Natural killer cell (primary cell): ENCODE measurements at regions of chr21 and their contacts with region 1.

Region 1: GRCh38 chr21:29073222-29074006 is at the start of gene CCT8:
- DNase-seq: peak; percentile 95 to 100
- ATAC-seq: peak; percentile 94 to 98 (median 95)
- H3K4me3 ChIP-seq: peak within 1 kb of the TSS; percentile 89
- H3K4me3 Mint-ChIP-seq: peak within 1 kb of the TSS; percentile 100
- H3K27ac ChIP-seq: peak within 1 kb of the TSS; percentile 80
- H3K27ac Mint-ChIP-seq: peak within 1 kb of the TSS; percentile 100
- H3K4me1 ChIP-seq: peaks cover 25% of the 10 kb centered on the region
- H3K4me1 Mint-ChIP-seq: peaks cover 44 to 56% of the 10 kb centered on the region in 2 donors
- H3K27me3 ChIP-seq: no peaks in the 10 kb centered on the region
- H3K27me3 Mint-ChIP-seq: no peaks in the 10 kb centered on the region
- CTCF ChIP-seq: no peak
- total RNA-seq, gene CCT8: 76.2 to 90.3 (median 82.9) TPM

Region 2: GRCh38 chr21:27393726-27394125 is 1679.7 kb before region 1 on chr21:
- intact Hi-C with region 1: no loop called
- DNase-seq: no peak
- ATAC-seq: no peak
- H3K4me3 ChIP-seq: no peak overlapping the region
- H3K4me3 Mint-ChIP-seq: no peak overlapping the region
- H3K27ac ChIP-seq: no peak overlapping the region
- H3K27ac Mint-ChIP-seq: no peak overlapping the region
- H3K4me1 ChIP-seq: no peaks in the 10 kb centered on the region
- H3K4me1 Mint-ChIP-seq: no peaks in the 10 kb centered on the region
- H3K27me3 ChIP-seq: no peaks in the 10 kb centered on the region
- H3K27me3 Mint-ChIP-seq: no peaks in the 10 kb centered on the region
- CTCF ChIP-seq: no peak

Region 3: GRCh38 chr21:28516991-28517592 is 556.3 kb before region 1 on chr21:
- intact Hi-C with region 1: no loop called
- DNase-seq: peak; percentile 39 to 76
- ATAC-seq: peak; percentile 78 to 80 (median 79)
- H3K4me3 ChIP-seq: no peak overlapping the region
- H3K4me3 Mint-ChIP-seq: no peak overlapping the region
- H3K27ac ChIP-seq: no peak overlapping the region
- H3K27ac Mint-ChIP-seq: no peak overlapping the region
- H3K4me1 ChIP-seq: peaks cover 5% of the 10 kb centered on the region
- H3K4me1 Mint-ChIP-seq: peaks cover 13 to 24% of the 10 kb centered on the region in 2 donors
- H3K27me3 ChIP-seq: no peaks in the 10 kb centered on the region
- H3K27me3 Mint-ChIP-seq: no peaks in the 10 kb centered on the region
- CTCF ChIP-seq: peak; percentile 62

Region 4: GRCh38 chr21:28832013-28832714 is 241.2 kb before region 1 on chr21:
- intact Hi-C with region 1: loop called (anchors 10 kb)
- DNase-seq: peak in 1 of 2 donors; percentile 69
- ATAC-seq: peak; percentile 81 to 92 (median 91)
- H3K4me3 ChIP-seq: no peak overlapping the region
- H3K4me3 Mint-ChIP-seq: peak overlapping the region; percentile 80
- H3K27ac ChIP-seq: peak overlapping the region; percentile 57
- H3K27ac Mint-ChIP-seq: peak overlapping the region; percentile 82 to 86
- H3K4me1 ChIP-seq: peaks cover 34% of the 10 kb centered on the region
- H3K4me1 Mint-ChIP-seq: peaks cover 90 to 93% of the 10 kb centered on the region in 2 donors
- H3K27me3 ChIP-seq: no peaks in the 10 kb centered on the region
- H3K27me3 Mint-ChIP-seq: no peaks in the 10 kb centered on the region
- CTCF ChIP-seq: no peak

Region 5: GRCh38 chr21:28884976-28885852 is 188.2 kb before region 1 on chr21:
- intact Hi-C with region 1: loop called (anchors 10 kb)
- DNase-seq: peak; percentile 86 to 98
- ATAC-seq: peak; percentile 89 to 98 (median 93)
- H3K4me3 ChIP-seq: peak overlapping the region; percentile 66
- H3K4me3 Mint-ChIP-seq: peak overlapping the region; percentile 95
- H3K27ac ChIP-seq: peak overlapping the region; percentile 86
- H3K27ac Mint-ChIP-seq: peak overlapping the region; percentile 98 to 100
- H3K4me1 ChIP-seq: peaks cover 3% of the 10 kb centered on the region
- H3K4me1 Mint-ChIP-seq: peaks cover 23 to 25% of the 10 kb centered on the region in 2 donors
- H3K27me3 ChIP-seq: no peaks in the 10 kb centered on the region
- H3K27me3 Mint-ChIP-seq: peaks cover 12 to 31% of the 10 kb centered on the region in 2 donors
- CTCF ChIP-seq: no peak

Region 6: GRCh38 chr21:28992526-28993292 is 80.7 kb before region 1 on chr21 and contains the start of gene LTN1:
- intact Hi-C with region 1: loop called (anchors 2 kb)
- DNase-seq: peak; percentile 99 to 100
- ATAC-seq: peak; percentile 94 to 99 (median 95)
- H3K4me3 ChIP-seq: peak within 1 kb of the TSS; percentile 89
- H3K4me3 Mint-ChIP-seq: peak within 1 kb of the TSS; percentile 99
- H3K27ac ChIP-seq: peak within 1 kb of the TSS; percentile 90
- H3K27ac Mint-ChIP-seq: peak within 1 kb of the TSS; percentile 95 to 98
- H3K4me1 ChIP-seq: peaks cover 10% of the 10 kb centered on the region
- H3K4me1 Mint-ChIP-seq: peaks cover 29 to 36% of the 10 kb centered on the region in 2 donors
- H3K27me3 ChIP-seq: no peaks in the 10 kb centered on the region
- H3K27me3 Mint-ChIP-seq: no peaks in the 10 kb centered on the region
- CTCF ChIP-seq: no peak
- total RNA-seq, gene LTN1: 33.7 to 43.1 (median 35.0) TPM

Region 7: DNA sequence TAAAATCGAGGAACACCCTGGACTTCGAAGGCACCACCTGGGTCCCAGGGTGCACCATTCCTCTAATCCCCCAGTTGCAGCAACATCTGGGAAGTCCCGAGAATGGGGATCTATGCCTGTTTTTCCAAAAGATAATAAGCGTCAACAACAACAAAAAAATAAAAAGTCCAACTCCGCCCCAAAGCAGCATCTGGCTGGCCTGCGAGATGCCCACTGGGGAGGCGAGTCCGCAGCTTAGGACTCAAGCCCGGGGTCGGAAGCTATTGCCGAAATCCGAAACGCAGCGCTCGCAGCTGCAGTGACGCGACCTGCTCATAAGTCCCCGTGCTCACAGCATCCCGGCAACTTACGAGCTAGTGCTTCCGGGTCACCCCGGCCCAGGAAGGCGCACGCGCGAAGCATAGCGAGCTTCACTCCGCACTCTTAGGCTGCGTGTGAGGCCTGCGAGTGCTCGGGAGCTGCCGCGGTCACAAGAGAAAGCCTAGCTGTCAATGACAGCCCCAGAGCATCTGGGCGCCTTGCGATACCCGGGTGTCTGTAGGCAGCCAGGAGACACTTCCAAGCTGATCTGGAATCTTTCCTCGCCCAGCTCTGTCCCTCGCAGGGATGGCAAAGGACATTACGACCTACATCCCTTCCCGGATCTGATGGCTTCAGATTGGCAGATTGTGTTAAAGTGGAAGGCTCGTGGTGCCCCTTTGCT is 70.8 kb before region 1 on chr21:
- intact Hi-C with region 1: loop called (anchors 1 kb)
- DNase-seq: peak; percentile 93 to 99
- ATAC-seq: peak; percentile 99 to 100 (median 100)
- H3K4me3 ChIP-seq: peak overlapping the region; percentile 69
- H3K4me3 Mint-ChIP-seq: peak overlapping the region; percentile 87
- H3K27ac ChIP-seq: peak overlapping the region; percentile 95
- H3K27ac Mint-ChIP-seq: peak overlapping the region; percentile 95 to 96
- H3K4me1 ChIP-seq: peaks cover 12% of the 10 kb centered on the region
- H3K4me1 Mint-ChIP-seq: peaks cover 6 to 7% of the 10 kb centered on the region in 2 donors
- H3K27me3 ChIP-seq: no peaks in the 10 kb centered on the region
- H3K27me3 Mint-ChIP-seq: no peaks in the 10 kb centered on the region
- CTCF ChIP-seq: no peak

Region 8: DNA sequence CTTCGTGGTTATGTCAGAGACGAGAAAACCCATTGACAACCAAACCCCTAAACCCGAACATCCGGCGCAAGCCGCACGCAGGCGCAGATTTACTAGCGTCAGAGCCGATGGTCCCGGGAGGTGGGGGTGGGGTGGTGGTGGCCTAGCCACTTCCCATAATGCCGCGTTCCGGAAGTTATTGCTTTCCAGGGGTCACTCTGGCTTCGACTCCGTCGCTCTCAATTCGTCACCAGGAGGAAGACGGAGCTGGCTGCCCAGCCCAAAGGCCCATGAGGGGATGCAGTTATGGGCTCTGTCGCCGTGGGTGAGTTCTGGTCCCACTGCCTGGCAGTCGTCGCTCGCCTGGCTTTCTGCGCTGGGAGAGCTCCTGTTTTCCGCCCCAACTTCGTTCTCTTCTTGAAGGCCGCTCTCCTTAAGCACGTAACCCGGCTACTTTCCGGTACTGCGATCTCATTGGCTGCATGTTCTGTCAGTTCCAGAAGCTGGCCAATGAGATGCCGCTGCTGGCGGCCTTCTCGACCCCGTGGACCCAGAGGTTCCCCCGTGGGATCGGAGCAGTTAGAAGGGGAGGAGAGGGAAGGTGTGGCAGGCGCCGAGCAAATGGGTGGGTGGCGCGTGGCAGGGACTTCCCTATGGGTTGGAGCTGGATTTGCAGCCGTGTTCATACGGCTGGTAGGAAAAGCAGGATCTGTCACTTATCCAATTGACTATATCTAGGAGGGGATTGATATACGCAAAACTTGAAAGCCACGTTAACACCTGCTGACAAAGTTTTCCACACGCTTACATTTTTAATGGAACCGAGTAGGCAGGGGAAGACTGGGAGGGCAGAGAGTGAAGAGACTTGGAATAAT is 48.7 kb before region 1 on chr21 and contains the start of gene USP16:
- intact Hi-C with region 1: loop called (anchors 1 kb)
- DNase-seq: peak; percentile 96 to 98
- ATAC-seq: peak; percentile 82 to 95 (median 85)
- H3K4me3 ChIP-seq: peak within 1 kb of the TSS; percentile 81
- H3K4me3 Mint-ChIP-seq: peak within 1 kb of the TSS; percentile 98
- H3K27ac ChIP-seq: peak within 1 kb of the TSS; percentile 98
- H3K27ac Mint-ChIP-seq: peak within 1 kb of the TSS; percentile 99 to 100
- H3K4me1 ChIP-seq: peaks cover 37% of the 10 kb centered on the region
- H3K4me1 Mint-ChIP-seq: peaks cover 43 to 56% of the 10 kb centered on the region in 2 donors
- H3K27me3 ChIP-seq: no peaks in the 10 kb centered on the region
- H3K27me3 Mint-ChIP-seq: no peaks in the 10 kb centered on the region
- CTCF ChIP-seq: no peak
- total RNA-seq, gene USP16: 67.9 to 76.9 (median 75.7) TPM

Region 9: DNA sequence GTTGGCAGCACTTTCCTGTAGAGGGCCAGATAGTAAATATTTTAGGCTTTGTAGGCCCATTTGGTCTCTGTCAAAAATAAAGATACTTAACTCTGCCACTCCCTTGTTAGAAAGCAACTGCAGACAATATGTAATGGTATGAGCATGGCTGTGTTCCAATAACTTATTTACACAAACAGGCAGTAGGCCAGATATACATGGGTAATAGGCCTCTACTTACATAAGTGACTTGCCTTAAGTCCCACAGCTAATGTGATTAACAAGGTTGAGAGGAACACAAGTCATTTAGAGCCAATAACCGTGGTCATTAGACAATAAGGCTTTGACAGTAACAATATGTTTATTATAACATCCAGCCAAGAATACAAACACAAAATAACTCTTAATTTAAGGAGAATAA is 17.4 kb before region 1 on chr21:
- intact Hi-C with region 1: no loop called
- DNase-seq: no peak
- ATAC-seq: no peak
- H3K4me3 ChIP-seq: no peak overlapping the region
- H3K4me3 Mint-ChIP-seq: no peak overlapping the region
- H3K27ac ChIP-seq: no peak overlapping the region
- H3K27ac Mint-ChIP-seq: peak overlapping the region in 1 of 2 donors; percentile 29
- H3K4me1 ChIP-seq: no peaks in the 10 kb centered on the region
- H3K4me1 Mint-ChIP-seq: no peaks in the 10 kb centered on the region
- H3K27me3 ChIP-seq: no peaks in the 10 kb centered on the region
- H3K27me3 Mint-ChIP-seq: no peaks in the 10 kb centered on the region
- CTCF ChIP-seq: no peak

Region 10: GRCh38 chr21:29298348-29299045 is 225.1 kb after region 1 on chr21 and contains the start of gene BACH1:
- intact Hi-C with region 1: loop called (anchors 2 kb)
- DNase-seq: peak; percentile 86 to 90
- ATAC-seq: peak; percentile 69 to 91 (median 84)
- H3K4me3 ChIP-seq: peak within 1 kb of the TSS; percentile 74
- H3K4me3 Mint-ChIP-seq: peak within 1 kb of the TSS; percentile 94
- H3K27ac ChIP-seq: peak within 1 kb of the TSS; percentile 84
- H3K27ac Mint-ChIP-seq: peak within 1 kb of the TSS; percentile 84 to 95
- H3K4me1 ChIP-seq: peaks cover 17% of the 10 kb centered on the region
- H3K4me1 Mint-ChIP-seq: peaks cover 35 to 51% of the 10 kb centered on the region in 2 donors
- H3K27me3 ChIP-seq: no peaks in the 10 kb centered on the region
- H3K27me3 Mint-ChIP-seq: no peaks in the 10 kb centered on the region
- CTCF ChIP-seq: no peak
- total RNA-seq, gene BACH1: 74.2 to 111 (median 86.3) TPM

Region 11: DNA sequence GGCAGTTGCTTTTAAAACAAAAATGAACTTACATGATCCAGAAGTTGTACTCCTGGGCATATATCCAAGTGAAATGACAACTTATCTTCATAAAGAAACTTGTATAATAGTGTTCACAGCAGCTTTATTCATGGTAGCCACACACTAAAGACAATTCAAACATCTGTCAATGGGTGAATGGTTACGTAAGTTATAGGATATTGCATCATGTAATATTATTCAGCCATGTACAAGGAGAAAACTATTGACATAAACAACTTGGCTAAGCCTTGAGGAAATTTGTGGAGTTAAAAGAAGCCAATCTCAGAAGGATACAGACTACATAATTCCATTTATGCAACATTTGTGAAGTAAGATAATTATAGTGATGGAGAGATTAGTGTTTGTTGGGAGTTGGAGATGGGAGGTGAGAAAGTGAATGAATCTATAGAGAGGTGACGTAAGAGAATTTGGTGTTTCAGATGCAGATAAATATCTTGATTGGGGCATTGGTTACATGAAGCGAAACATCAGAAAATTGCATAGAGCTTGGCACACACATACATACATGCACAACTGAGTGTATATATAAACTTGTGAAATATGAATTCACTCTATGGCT is 916.3 kb after region 1 on chr21:
- intact Hi-C with region 1: no loop called
- DNase-seq: no peak
- ATAC-seq: no peak
- H3K4me3 ChIP-seq: no peak overlapping the region
- H3K4me3 Mint-ChIP-seq: no peak overlapping the region
- H3K27ac ChIP-seq: no peak overlapping the region
- H3K27ac Mint-ChIP-seq: no peak overlapping the region
- H3K4me1 ChIP-seq: no peaks in the 10 kb centered on the region
- H3K4me1 Mint-ChIP-seq: no peaks in the 10 kb centered on the region
- H3K27me3 ChIP-seq: no peaks in the 10 kb centered on the region
- H3K27me3 Mint-ChIP-seq: no peaks in the 10 kb centered on the region
- CTCF ChIP-seq: no peak